Endothelial cell of umbilical vein (primary cell): ENCODE measurements at regions of chr20 and their contacts with region 1.

Region 1: DNA sequence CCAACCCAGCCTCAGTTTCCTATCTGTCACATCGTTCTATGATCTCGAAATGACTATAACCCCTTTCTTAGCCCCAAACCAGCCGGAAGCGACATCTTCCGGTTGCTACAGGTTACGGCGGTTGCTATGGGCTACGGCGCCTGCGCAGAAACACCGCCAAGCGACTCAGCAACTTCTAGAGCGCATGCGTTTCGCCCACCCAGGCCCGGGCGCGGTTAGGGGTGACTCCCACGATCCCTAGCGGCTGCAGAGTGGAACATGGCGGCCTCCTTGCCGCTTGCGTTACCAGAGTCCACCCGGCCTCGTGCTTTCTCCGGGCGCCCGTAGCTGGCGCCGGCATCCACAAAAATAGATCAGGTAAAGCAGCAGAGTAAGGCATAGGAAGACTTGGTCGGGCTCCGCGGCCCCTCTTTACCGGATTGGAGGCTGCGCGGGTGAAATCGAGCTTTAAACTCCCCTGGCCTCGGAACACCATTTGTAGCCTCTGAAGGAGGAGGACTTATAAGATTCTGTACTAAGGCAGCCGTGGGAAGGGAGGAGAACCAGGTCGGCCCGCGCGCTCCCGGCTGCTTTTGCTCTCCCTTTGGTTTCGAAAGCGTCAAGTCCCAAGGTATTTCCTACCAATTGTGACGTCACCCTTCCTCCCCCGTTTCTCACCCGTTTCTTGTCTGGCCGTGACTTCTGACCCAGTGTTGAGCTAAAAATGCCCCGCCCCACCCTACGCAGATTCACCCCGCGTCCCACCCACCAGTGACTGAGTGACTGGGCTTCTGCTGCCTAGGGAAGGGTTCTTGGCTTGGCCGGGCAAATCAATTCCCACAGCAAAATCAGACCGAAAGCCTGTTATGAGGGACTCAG is 3.5 kb downstream of the SDCBP2 start:
- DNase-seq: peak; percentile 97
- H3K4me3 ChIP-seq: peak overlapping the region; percentile 34 to 68 (median 67)
- H3K27ac ChIP-seq: peak overlapping the region; percentile 99
- H3K4me1 ChIP-seq: peaks cover 76% of the 10 kb centered on the region
- H3K27me3 ChIP-seq: no peaks in the 10 kb centered on the region
- CTCF ChIP-seq: peak in 1 of 2 donors; percentile 29
- POLR2A ChIP-seq: peak; percentile 86

Region 2: GRCh38 chr20:1225783-1226654 is 99.4 kb before region 1 on chr20 and contains the start of gene RAD21L1:
- CTCF ChIA-PET with region 1: no interaction called
- POLR2A ChIA-PET with region 1: no interaction called
- dilution Hi-C with region 1: no loop called
- intact Hi-C with region 1: loop called (anchors 5 kb)
- DNase-seq: peak; percentile 50
- H3K4me3 ChIP-seq: peak within 1 kb of the TSS; percentile 70 to 90 (median 71)
- H3K27ac ChIP-seq: peak within 1 kb of the TSS; percentile 70
- H3K4me1 ChIP-seq: peaks cover 6% of the 10 kb centered on the region
- H3K27me3 ChIP-seq: peaks cover 0 to 23% of the 10 kb centered on the region in 2 experiments
- CTCF ChIP-seq: no peak
- POLR2A ChIP-seq: no peak
- total RNA-seq, gene RAD21L1: not detected in 2 replicates

Region 3: GRCh38 chr20:1291191-1291741 is 34.1 kb before region 1 on chr20:
- CTCF ChIA-PET with region 1: no interaction called
- POLR2A ChIA-PET with region 1: no interaction called
- dilution Hi-C with region 1: no loop called
- intact Hi-C with region 1: no loop called
- DNase-seq: peak; percentile 33
- H3K4me3 ChIP-seq: no peak overlapping the region
- H3K27ac ChIP-seq: no peak overlapping the region
- H3K4me1 ChIP-seq: no peaks in the 10 kb centered on the region
- H3K27me3 ChIP-seq: no peaks in the 10 kb centered on the region
- CTCF ChIP-seq: no peak
- POLR2A ChIP-seq: no peak

Region 4: DNA sequence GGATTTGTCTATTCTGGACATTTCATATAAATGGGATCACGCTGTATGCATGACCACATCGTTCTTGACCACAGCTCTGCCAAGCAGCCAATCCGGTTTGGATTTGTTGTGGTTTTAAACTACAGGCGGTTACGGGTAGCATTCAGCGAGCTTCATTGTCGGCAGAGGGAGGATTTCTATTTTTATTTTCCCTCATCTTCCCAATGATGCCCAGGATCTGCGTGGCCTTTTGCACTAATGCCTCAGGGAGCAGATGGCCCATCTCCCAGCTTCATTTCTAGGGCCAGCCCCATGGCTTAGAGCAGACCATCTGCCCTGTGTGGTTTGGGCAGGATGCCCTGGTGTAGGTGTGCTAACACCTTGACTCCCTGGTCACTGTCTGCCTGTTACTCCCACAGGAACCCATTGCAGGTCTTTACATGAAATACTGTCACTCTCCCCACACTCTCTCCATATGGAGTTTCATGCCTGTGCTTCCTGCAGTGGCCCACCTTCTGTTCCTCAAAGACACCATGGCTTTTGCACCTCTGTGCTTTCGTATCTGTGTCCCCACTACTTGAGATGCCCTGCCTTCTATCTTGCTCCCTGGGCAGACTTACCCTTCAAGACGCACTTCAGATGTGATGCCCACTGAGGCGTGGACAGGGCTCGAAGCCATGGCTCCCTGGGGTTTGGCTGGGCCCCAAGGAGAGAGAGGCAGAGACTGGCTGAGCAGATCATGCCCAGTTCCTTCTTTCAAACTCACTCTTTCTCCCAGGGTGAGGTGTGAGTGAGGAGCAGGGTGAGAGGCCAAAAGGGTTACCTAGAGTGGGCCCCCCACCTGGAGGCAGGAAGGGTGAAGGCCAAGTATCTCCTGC is 22.5 kb before region 1 on chr20:
- CTCF ChIA-PET with region 1: no interaction called
- POLR2A ChIA-PET with region 1: no interaction called
- dilution Hi-C with region 1: no loop called
- intact Hi-C with region 1: no loop called
- DNase-seq: no peak
- H3K4me3 ChIP-seq: no peak overlapping the region
- H3K27ac ChIP-seq: no peak overlapping the region
- H3K4me1 ChIP-seq: peaks cover 12% of the 10 kb centered on the region
- H3K27me3 ChIP-seq: no peaks in the 10 kb centered on the region
- CTCF ChIP-seq: no peak
- POLR2A ChIP-seq: no peak

Region 5: DNA sequence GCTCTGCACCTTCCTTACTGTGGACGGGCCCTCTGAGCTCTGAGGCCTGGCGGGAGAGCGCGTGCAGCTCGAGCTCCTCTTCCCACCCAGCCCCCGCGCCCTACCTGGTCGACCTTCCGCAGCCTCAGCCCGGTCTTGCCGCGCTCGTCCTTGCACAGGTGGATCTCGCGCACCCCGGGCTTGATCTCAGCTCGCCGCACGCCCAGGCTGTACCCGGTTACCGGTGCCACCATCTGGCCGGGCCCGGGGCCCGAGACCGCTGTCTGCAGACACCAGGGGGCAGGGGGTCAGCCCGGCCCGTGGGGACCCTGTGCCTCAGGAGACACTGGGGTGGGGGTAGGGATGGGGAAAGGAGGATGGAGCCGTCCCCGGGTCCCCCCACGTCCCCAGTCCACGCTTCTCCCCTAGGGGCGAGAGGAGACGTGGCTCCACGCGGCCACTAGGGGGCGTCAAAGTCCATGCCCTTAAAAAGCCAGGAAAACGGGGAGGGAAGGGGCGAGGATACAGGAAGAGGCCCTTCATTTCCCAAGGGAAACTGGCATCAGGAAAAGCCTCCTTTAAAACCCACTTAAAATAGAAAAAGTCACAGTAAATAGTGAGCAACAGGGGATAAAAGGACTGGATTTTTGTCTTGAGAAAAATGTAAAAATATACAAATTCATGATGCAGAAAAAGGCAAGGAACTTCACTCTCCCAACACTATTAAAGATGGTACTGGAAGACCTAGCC is 12.0 kb before region 1 on chr20:
- CTCF ChIA-PET with region 1: interaction called, 4 read pairs
- POLR2A ChIA-PET with region 1: no interaction called
- dilution Hi-C with region 1: no loop called
- intact Hi-C with region 1: loop called (anchors 1 kb)
- DNase-seq: peak; percentile 78
- H3K4me3 ChIP-seq: peak overlapping the region in 1 of 3 experiments; percentile 8
- H3K27ac ChIP-seq: peak overlapping the region; percentile 61
- H3K4me1 ChIP-seq: peaks cover 9% of the 10 kb centered on the region
- H3K27me3 ChIP-seq: no peaks in the 10 kb centered on the region
- CTCF ChIP-seq: peak; percentile 89 to 95
- POLR2A ChIP-seq: no peak

Region 6: DNA sequence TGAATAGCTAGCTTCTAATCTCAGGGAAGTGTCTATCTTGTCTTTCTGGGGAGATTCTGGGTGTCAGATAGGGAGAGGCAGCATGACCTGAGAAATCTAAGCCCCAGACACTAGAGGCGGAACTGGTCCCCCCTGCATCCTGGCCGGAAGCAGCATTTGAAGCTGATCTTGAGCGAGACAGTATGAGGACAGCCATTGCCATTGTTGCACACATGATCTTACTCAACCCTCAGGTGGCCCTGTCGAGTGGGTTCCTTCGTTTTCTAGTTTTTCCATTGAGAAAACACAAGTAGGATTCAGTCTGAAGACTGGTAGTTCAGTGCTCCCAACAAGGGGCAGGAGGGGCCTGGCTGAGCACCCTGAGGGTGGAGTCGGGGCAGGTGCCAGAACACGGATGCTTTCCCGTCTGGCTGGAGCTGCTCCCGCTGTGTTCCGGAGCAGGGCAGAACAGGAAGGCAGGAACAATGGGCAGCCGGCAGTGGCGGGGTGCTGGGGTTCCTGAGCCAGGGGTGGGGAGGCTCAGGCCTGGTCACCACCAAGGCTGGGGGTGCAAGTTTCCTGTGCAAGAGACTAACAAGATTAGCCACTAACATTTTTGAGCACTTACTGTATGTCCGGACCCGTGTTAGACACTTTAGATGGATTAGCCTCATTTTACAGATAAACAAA is 11.4 kb after region 1 on chr20:
- CTCF ChIA-PET with region 1: interaction called, 10 read pairs
- POLR2A ChIA-PET with region 1: interaction called, 16 read pairs
- dilution Hi-C with region 1: no loop called
- intact Hi-C with region 1: loop called (anchors 1 kb)
- DNase-seq: peak; percentile 97
- H3K4me3 ChIP-seq: no peak overlapping the region
- H3K27ac ChIP-seq: peak overlapping the region; percentile 93
- H3K4me1 ChIP-seq: peaks cover 53% of the 10 kb centered on the region
- H3K27me3 ChIP-seq: no peaks in the 10 kb centered on the region
- CTCF ChIP-seq: no peak
- POLR2A ChIP-seq: peak; percentile 59

Region 7: DNA sequence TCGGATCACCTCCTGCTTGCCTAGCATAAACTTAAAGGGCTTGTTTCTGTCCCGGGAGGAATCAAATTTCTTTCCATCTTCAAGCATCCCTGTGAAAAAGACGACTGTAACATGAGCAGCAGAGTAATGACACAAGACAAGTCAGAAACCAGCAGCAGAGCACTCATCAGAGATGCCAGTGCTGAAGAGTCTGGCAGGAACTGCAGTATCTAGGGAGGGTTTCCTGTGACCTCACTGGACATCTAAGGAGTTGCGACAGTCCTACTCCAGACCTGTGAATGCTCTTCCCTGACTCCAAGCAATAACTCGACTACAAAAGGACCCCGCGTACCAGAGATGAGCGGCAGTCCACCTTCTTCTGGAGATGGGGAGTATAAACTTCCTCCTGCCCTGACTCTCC is 50.1 kb after region 1 on chr20:
- CTCF ChIA-PET with region 1: interaction called, 12 read pairs
- POLR2A ChIA-PET with region 1: no interaction called
- dilution Hi-C with region 1: no loop called
- intact Hi-C with region 1: loop called (anchors 1 kb)
- DNase-seq: peak; percentile 47
- H3K4me3 ChIP-seq: no peak overlapping the region
- H3K27ac ChIP-seq: peak overlapping the region; percentile 83
- H3K4me1 ChIP-seq: peaks cover 99% of the 10 kb centered on the region
- H3K27me3 ChIP-seq: no peaks in the 10 kb centered on the region
- CTCF ChIP-seq: no peak
- POLR2A ChIP-seq: peak; percentile 45

Region 8: GRCh38 chr20:1491281-1491840 is 166.0 kb after region 1 on chr20 and contains the start of gene SIRPB2:
- CTCF ChIA-PET with region 1: no interaction called
- POLR2A ChIA-PET with region 1: no interaction called
- dilution Hi-C with region 1: no loop called
- intact Hi-C with region 1: loop called (anchors 1 kb)
- DNase-seq: peak; percentile 96
- H3K4me3 ChIP-seq: peak within 1 kb of the TSS in 2 of 3 experiments; percentile 25 to 47
- H3K27ac ChIP-seq: peak within 1 kb of the TSS; percentile 90
- H3K4me1 ChIP-seq: peaks cover 31% of the 10 kb centered on the region
- H3K27me3 ChIP-seq: peaks cover 0 to 2% of the 10 kb centered on the region in 2 experiments
- CTCF ChIP-seq: no peak
- POLR2A ChIP-seq: peak; percentile 30
- total RNA-seq, gene SIRPB2: 9.5 and 12.3 TPM in 2 replicates

Region 9: DNA sequence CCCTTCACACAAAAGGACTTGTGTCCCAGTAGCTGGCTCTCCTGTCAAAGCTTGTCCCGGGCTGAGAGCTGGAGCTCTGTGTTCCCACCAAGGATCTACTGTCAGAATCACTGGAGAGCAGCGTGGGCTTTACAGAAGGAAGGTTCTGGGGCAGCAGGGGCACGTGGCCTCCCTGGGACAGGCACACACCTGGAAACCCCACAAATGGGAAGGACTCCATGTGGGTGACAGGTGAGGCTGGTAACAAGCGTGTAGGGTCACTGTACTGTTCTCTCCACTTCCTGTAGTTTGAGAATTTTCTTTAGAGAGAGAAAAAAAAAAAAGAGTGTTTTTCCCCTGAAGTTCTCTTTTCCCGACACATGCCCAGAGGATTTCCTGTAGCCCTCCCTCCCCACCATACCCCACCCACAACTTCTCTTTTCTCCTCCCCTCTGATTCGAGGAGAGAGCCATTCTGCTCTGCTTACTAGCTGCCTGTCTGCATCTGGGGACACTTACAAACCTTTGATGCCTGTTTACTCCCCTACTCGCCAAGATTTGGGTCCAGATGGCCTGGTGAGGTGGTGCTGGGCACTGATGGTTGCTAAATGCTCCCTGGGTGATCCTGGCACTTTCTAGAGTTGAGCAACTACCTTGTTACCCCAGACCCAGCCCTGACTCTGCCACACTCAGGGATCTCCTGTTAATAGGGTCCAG is 485.7 kb after region 1 on chr20:
- CTCF ChIA-PET with region 1: no interaction called
- POLR2A ChIA-PET with region 1: no interaction called
- dilution Hi-C with region 1: no loop called
- intact Hi-C with region 1: loop called (anchors 1 kb)
- DNase-seq: peak; percentile 75
- H3K4me3 ChIP-seq: no peak overlapping the region
- H3K27ac ChIP-seq: peak overlapping the region; percentile 79
- H3K4me1 ChIP-seq: peaks cover 56% of the 10 kb centered on the region
- H3K27me3 ChIP-seq: no peaks in the 10 kb centered on the region
- CTCF ChIP-seq: no peak
- POLR2A ChIP-seq: no peak